ENCODE measurements at regions of chr2 and their contacts with region 1.

Region 1: GRCh38 chr2:235521844-235522243 is 28.0 kb downstream of the AGAP1 start:
- DNase-seq: no peak
- H3K4me3 ChIP-seq: no peak overlapping the region
- CTCF ChIP-seq: no peak
- POLR2A ChIP-seq: no peak

Region 2: DNA sequence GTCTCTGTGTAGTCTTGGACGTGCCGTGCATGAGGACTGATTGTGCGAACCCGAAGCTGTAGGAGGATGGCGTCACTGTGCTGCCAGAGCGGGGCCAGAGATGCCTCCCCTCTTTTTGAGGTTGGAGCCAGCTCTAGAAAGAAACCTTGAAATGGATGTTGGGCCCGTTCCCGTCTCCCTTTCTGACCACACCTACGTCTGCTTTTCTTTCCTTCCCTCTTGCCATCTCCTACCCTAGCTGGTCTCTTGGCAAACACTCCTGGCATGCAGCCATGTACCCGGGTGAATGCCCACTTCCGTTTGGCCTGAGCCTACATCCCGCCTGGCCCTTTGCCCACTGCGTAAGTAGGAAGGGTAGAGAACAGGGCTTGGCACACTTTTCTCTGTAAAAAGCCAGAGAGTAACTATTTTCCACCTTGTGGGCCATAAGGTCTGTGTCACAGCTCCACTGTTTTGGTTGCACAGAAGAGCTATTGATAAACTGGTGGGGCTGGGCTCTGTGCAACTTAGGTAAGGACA is 532.6 kb before region 1 on chr2:
- intact Hi-C with region 1: no loop called
- DNase-seq: peak; percentile 77 to 95
- H3K4me3 ChIP-seq: no peak overlapping the region
- CTCF ChIP-seq: no peak
- POLR2A ChIP-seq: no peak

Region 3: DNA sequence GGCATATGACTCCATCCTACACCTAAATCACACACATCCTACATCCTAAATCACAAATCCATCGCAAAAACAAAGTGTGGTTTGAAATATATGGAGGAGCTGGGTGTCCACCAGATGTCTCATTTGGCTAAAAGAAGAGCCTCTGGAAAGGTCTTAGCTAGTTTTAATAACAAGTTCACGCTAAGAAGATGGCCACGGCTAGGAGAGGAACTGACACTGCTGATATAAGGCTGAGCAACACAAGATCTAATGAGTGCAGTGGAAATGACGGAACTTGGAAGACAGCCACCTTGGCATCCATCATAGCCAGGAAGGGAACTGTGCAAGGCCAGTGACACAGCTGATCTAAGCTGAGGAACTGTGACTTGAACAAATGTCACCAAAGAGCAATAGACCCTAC is 88.0 kb before region 1 on chr2:
- intact Hi-C with region 1: no loop called
- DNase-seq: peak; percentile 77 to 92
- H3K4me3 ChIP-seq: no peak overlapping the region
- CTCF ChIP-seq: no peak
- POLR2A ChIP-seq: no peak

Region 4: GRCh38 chr2:235495373-235496238 is 26.2 kb before region 1 on chr2:
- intact Hi-C with region 1: loop called (anchors 2 kb)
- DNase-seq: no peak
- H3K4me3 ChIP-seq: no peak overlapping the region
- CTCF ChIP-seq: no peak
- POLR2A ChIP-seq: no peak